ENCODE measurements at regions of chr17 and their contacts with region 1.

Region 1: DNA sequence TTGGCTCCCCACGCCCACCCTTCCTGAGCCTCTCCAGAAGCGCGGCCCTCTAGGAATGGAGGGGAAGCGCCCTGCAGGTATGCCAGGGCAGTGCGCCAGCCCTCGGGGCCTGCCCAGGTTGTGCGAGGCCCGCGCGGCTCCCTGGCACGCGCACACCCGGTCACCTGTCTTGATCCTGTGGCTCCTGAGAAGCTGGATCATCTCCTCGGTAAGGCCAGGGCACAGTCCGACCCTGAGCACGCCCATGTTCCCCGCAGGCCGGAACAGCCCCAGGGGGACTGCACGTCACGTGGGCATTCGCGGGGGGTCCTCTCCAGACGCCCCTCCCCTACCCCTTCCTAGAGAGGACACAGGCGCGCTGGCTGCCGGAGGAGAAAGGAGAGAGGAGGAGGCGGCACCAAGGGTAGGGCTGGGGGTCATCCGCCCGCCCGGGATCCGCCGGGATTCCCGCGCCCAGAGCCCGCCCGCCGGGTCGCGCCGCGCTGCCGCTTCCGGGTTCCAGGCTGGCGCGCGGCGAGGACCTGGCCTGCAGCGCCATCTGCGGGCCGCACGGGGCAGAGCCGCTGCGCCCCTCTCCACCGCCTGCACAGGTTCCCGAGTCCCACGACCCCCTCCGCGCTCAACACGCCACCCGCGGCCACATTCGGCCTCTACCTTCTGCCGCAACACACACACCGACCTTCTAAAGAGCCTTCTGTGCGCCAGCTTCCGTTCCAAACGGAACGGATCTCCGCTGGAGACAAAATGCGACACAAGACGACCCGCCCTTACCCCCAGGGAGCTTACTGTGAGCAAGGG is at the start of gene RAD51D:
- DNase-seq: peak; percentile 66 to 91
- H3K4me3 ChIP-seq: peak within 1 kb of the TSS; percentile 50 to 75 (median 69)
- H3K27ac ChIP-seq: peak within 1 kb of the TSS; percentile 27; the same call in 1 of the 2 replicates
- H3K4me1 ChIP-seq: peaks cover 0 to 4% (median 3%) of the 10 kb centered on the region in 4 experiments; a peak in 4 of 7 replicates
- H3K27me3 ChIP-seq: peaks cover 0 to 14% (median 3%) of the 10 kb centered on the region in 4 experiments; a peak in 3 of 7 replicates
- CTCF ChIP-seq: peak; percentile 87 to 97 (median 95)
- EP300 ChIP-seq: peak in 1 of 2 experiments; percentile 33; a peak in 1 of 3 replicates
- POLR2A ChIP-seq: 0 out of 3 replicates have a peak, but pooled peaks of 1 of the 2 experiments have one; percentile 53
- RAD21 ChIP-seq: peak; percentile 84 to 95
- total RNA-seq, gene RAD51D: 12.9 and 13.7 TPM in 2 replicates

Region 2: GRCh38 chr17:34990921-34991365 is 128.6 kb before region 1 on chr17:
- CTCF ChIA-PET with region 1: interaction called, 43 read pairs
- POLR2A ChIA-PET with region 1: interaction called, 10 read pairs
- DNase-seq: no peak
- H3K4me3 ChIP-seq: no peak overlapping the region
- H3K27ac ChIP-seq: no peak overlapping the region
- H3K4me1 ChIP-seq: no peaks in the 10 kb centered on the region
- H3K27me3 ChIP-seq: no peaks in the 10 kb centered on the region
- CTCF ChIP-seq: no peak
- EP300 ChIP-seq: no peak
- POLR2A ChIP-seq: no peak
- RAD21 ChIP-seq: no peak

Region 3: DNA sequence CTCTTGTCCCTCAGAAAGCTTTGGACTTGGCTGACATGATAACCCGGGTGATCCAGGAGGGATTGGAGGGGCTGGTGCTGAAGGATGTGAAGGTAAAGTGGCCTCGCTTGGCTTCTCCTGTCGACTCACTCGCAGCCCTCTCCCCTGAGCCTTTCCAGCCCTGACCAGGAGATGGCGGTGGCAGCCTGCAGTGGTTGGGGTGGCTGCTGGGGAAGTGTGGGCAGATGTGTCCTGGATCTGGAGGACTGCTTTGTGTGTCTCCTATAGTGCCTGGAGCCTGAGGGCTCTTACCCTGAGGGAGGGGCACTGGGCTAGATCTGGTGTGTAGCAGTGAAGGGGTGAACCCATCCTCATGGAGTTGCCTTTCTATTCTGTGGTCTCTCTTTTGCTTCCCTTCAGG is 121.4 kb before region 1 on chr17:
- CTCF ChIA-PET with region 1: interaction called, 43 read pairs
- POLR2A ChIA-PET with region 1: interaction called, 3 read pairs
- DNase-seq: peak; percentile 31 to 83
- H3K4me3 ChIP-seq: no peak overlapping the region
- H3K27ac ChIP-seq: no peak overlapping the region
- H3K4me1 ChIP-seq: no peaks in the 10 kb centered on the region
- H3K27me3 ChIP-seq: no peaks in the 10 kb centered on the region
- CTCF ChIP-seq: peak; percentile 87 to 93 (median 88)
- EP300 ChIP-seq: no peak
- POLR2A ChIP-seq: no peak
- RAD21 ChIP-seq: peak; percentile 95

Region 4: DNA sequence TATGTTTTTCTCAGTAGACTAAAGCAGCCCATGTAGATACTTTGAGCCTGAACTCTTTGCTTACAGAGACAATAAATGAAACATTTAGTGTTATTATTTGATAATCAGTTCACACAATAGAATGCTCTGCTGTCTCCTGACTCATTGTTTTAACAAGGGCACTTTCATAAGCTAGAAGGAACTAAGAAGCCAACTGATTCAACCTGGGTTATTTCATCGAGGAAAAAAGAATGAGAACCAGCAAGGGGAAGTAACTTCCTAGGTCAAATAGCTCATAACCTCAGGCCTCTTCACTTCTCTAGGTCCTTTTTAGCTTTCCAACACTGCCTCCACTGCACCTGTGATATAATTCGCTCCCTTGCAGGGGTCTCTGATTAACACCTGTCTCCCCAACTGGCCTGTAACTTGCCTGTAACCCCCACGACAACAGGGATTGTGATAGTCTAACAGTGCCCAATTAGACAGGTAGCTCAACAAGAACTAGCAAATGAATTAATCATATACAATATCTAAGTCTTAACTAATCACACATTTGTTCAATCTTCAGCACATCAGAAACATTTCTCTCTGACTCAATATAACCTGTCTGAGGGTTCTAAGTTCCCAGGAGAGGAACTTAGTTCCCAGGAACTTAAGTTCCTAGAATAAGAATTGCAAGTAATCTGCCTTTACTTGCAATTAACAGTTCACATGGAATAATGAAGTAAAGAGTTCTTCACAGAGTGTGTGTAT is 90.9 kb before region 1 on chr17:
- CTCF ChIA-PET with region 1: no interaction called
- POLR2A ChIA-PET with region 1: no interaction called
- DNase-seq: no peak
- H3K4me3 ChIP-seq: no peak overlapping the region
- H3K27ac ChIP-seq: no peak overlapping the region
- H3K4me1 ChIP-seq: no peaks in the 10 kb centered on the region
- H3K27me3 ChIP-seq: no peaks in the 10 kb centered on the region
- CTCF ChIP-seq: no peak
- EP300 ChIP-seq: no peak
- POLR2A ChIP-seq: no peak
- RAD21 ChIP-seq: no peak

Region 5: GRCh38 chr17:35094902-35095301 is 24.7 kb before region 1 on chr17:
- CTCF ChIA-PET with region 1: interaction called, 26 read pairs
- POLR2A ChIA-PET with region 1: interaction called, 6 read pairs
- DNase-seq: no peak
- H3K4me3 ChIP-seq: no peak overlapping the region
- H3K27ac ChIP-seq: no peak overlapping the region
- H3K4me1 ChIP-seq: peaks cover 0 to 3% (median under 1%) of the 10 kb centered on the region in 4 experiments; a peak in 4 of 7 replicates
- H3K27me3 ChIP-seq: no peaks in the 10 kb centered on the region
- CTCF ChIP-seq: no peak
- EP300 ChIP-seq: no peak
- POLR2A ChIP-seq: no peak
- RAD21 ChIP-seq: no peak

Region 6: GRCh38 chr17:35141681-35142466 is 22.3 kb after region 1 on chr17 and contains the start of gene NLE1:
- CTCF ChIA-PET with region 1: interaction called, 11 read pairs
- POLR2A ChIA-PET with region 1: interaction called, 6 read pairs
- DNase-seq: peak; percentile 66 to 98
- H3K4me3 ChIP-seq: peak within 1 kb of the TSS; percentile 80 to 100 (median 92)
- H3K27ac ChIP-seq: peak within 1 kb of the TSS; percentile 16; the same call in 1 of the 2 replicates
- H3K4me1 ChIP-seq: no peaks in the 10 kb centered on the region; a peak in 1 of 7 replicates
- H3K27me3 ChIP-seq: no peaks in the 10 kb centered on the region
- CTCF ChIP-seq: peak; percentile 86 to 98 (median 92)
- EP300 ChIP-seq: peak in 1 of 2 experiments; percentile 53; a peak in 1 of 3 replicates
- POLR2A ChIP-seq: peak in 1 of 2 experiments; percentile 77; a peak in 2 of 3 replicates
- RAD21 ChIP-seq: peak; percentile 28 to 49
- total RNA-seq, gene NLE1: 50.1 and 51.5 TPM in 2 replicates